Naive thymus-derived CD4-positive, alpha-beta T cell (primary cell): ENCODE measurements at regions of chr2 and their contacts with region 1.

Region 1: GRCh38 chr2:224585205-224586088 is at the start of gene CUL3:
- DNase-seq: peak; percentile 98 to 100 (median 99)
- ATAC-seq: peak; percentile 96
- H3K4me3 ChIP-seq: peak within 1 kb of the TSS; percentile 93
- H3K4me3 Mint-ChIP-seq: peak within 1 kb of the TSS; percentile 84 to 100 (median 98)
- H3K27ac ChIP-seq: peak within 1 kb of the TSS; percentile 92
- H3K27ac Mint-ChIP-seq: peak within 1 kb of the TSS; percentile 85 to 98 (median 93)
- H3K4me1 ChIP-seq: peaks cover 22 to 28% of the 10 kb centered on the region in 2 donors
- H3K4me1 Mint-ChIP-seq: peaks cover 9 to 50% (median 45%) of the 10 kb centered on the region in 7 donors
- H3K27me3 ChIP-seq: no peaks in the 10 kb centered on the region
- H3K27me3 Mint-ChIP-seq: no peaks in the 10 kb centered on the region
- total RNA-seq, gene CUL3: 70.5 to 97.0 (median 87.8) TPM

Region 2: GRCh38 chr2:222860740-222861410 is 1724.6 kb before region 1 on chr2 and contains the start of gene ACSL3:
- CTCF ChIA-PET with region 1: no interaction called
- POLR2A ChIA-PET with region 1: no interaction called
- intact Hi-C with region 1: loop called (anchors 2 to 5 kb)
- DNase-seq: peak; percentile 85 to 96 (median 91)
- ATAC-seq: peak; percentile 99
- H3K4me3 ChIP-seq: peak within 1 kb of the TSS; percentile 82
- H3K4me3 Mint-ChIP-seq: peak within 1 kb of the TSS in 9 of 10 donors; percentile 62 to 88 (median 79)
- H3K27ac ChIP-seq: peak within 1 kb of the TSS; percentile 90
- H3K27ac Mint-ChIP-seq: peak within 1 kb of the TSS in 8 of 9 donors; percentile 87 to 96 (median 92)
- H3K4me1 ChIP-seq: peaks cover 13 to 20% of the 10 kb centered on the region in 2 donors
- H3K4me1 Mint-ChIP-seq: peaks cover 0 to 15% (median 9%) of the 10 kb centered on the region in 7 donors
- H3K27me3 ChIP-seq: no peaks in the 10 kb centered on the region
- H3K27me3 Mint-ChIP-seq: peaks cover 0 to 15% (median 0%) of the 10 kb centered on the region in 5 donors
- total RNA-seq, gene ACSL3: 30.3 to 69.6 (median 40.5) TPM

Region 3: DNA sequence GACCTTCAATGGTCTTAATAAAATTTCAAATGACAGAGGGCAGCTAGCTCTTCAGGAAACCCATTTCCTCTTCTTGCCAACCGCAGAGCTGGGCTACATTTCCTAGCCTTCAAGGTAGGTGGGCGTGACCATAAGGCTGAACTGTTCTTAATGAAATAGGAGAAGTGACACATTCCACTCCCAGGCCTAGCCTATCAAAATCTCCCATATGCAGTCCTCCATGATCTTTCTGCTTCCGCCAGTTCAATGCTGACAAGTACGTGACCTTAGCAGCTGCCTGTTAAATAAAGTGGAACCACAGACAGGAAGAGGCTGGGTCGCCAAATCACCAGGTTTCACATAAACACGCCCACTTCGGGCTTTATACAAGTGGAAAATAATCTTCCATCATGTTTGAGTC is 559.6 kb before region 1 on chr2:
- CTCF ChIA-PET with region 1: no interaction called
- POLR2A ChIA-PET with region 1: no interaction called
- intact Hi-C with region 1: loop called (anchors 1 to 2 kb)
- DNase-seq: peak in 8 of 9 donors; percentile 47 to 78 (median 68)
- ATAC-seq: peak; percentile 93
- H3K4me3 ChIP-seq: no peak overlapping the region
- H3K4me3 Mint-ChIP-seq: peak overlapping the region; percentile 31 to 86 (median 60)
- H3K27ac ChIP-seq: peak overlapping the region; percentile 56
- H3K27ac Mint-ChIP-seq: peak overlapping the region; percentile 85 to 96 (median 92)
- H3K4me1 ChIP-seq: peaks cover 0 to 56% of the 10 kb centered on the region in 2 donors
- H3K4me1 Mint-ChIP-seq: peaks cover 37 to 86% (median 70%) of the 10 kb centered on the region in 7 donors
- H3K27me3 ChIP-seq: no peaks in the 10 kb centered on the region
- H3K27me3 Mint-ChIP-seq: no peaks in the 10 kb centered on the region

Region 4: GRCh38 chr2:224638301-224638823 is 52.9 kb after region 1 on chr2:
- CTCF ChIA-PET with region 1: no interaction called
- POLR2A ChIA-PET with region 1: interaction called, 4 read pairs
- intact Hi-C with region 1: loop called (anchors 2 to 5 kb)
- DNase-seq: peak in 7 of 9 donors; percentile 15 to 68 (median 51)
- ATAC-seq: peak; percentile 74
- H3K4me3 ChIP-seq: no peak overlapping the region
- H3K4me3 Mint-ChIP-seq: peak overlapping the region; percentile 8 to 72 (median 49)
- H3K27ac ChIP-seq: peak overlapping the region; percentile 42
- H3K27ac Mint-ChIP-seq: peak overlapping the region; percentile 76 to 96 (median 88)
- H3K4me1 ChIP-seq: peaks cover 0 to 14% of the 10 kb centered on the region in 2 donors
- H3K4me1 Mint-ChIP-seq: peaks cover 5 to 24% (median 13%) of the 10 kb centered on the region in 7 donors
- H3K27me3 ChIP-seq: no peaks in the 10 kb centered on the region
- H3K27me3 Mint-ChIP-seq: peaks cover 0 to 5% (median 0%) of the 10 kb centered on the region in 5 donors

Region 5: GRCh38 chr2:224922142-224922727 is 336.8 kb after region 1 on chr2:
- CTCF ChIA-PET with region 1: no interaction called
- POLR2A ChIA-PET with region 1: no interaction called
- intact Hi-C with region 1: loop called in 1 of 2 experiments (anchors 10 kb)
- DNase-seq: no peak
- ATAC-seq: peak; percentile 55
- H3K4me3 ChIP-seq: no peak overlapping the region
- H3K4me3 Mint-ChIP-seq: peak overlapping the region in 2 of 10 donors; percentile 15 to 17
- H3K27ac ChIP-seq: peak overlapping the region; percentile 44
- H3K27ac Mint-ChIP-seq: peak overlapping the region; percentile 26 to 99 (median 82)
- H3K4me1 ChIP-seq: peaks cover 35 to 52% of the 10 kb centered on the region in 2 donors
- H3K4me1 Mint-ChIP-seq: peaks cover 36 to 55% (median 50%) of the 10 kb centered on the region in 7 donors
- H3K27me3 ChIP-seq: no peaks in the 10 kb centered on the region
- H3K27me3 Mint-ChIP-seq: no peaks in the 10 kb centered on the region